OCI-LY7 (cell line): ENCODE measurements at regions of chr11 and their contacts with region 1.

Region 1: DNA sequence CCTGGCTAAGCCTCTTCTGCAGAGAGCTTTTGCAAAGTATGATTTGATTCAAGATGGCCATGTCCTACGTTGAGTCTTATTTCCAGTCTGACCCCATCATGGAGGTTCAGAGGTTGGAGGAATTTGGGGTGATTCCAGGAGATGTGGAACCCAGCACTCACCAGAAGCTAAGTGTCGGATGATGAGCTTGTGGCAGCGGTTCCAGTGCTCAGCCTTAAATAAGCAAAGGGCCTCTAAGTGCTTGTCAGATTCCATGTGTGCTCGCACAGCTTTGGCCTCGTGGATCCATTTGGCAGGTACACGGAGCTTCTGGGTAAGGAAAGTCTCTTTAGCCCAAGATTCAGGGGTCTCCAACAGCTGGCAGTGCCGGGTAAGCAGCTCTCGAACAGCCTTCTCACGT is 11.9 kb upstream of the CHRNA10 start:
- DNase-seq: no peak
- H3K4me3 ChIP-seq: no peak overlapping the region
- H3K27ac ChIP-seq: no peak overlapping the region
- H3K4me1 ChIP-seq: no peaks in the 10 kb centered on the region
- CTCF ChIP-seq: no peak

Region 2: GRCh38 chr11:3723014-3723708 is 40.1 kb after region 1 on chr11:
- CTCF ChIA-PET with region 1: no interaction called
- POLR2A ChIA-PET with region 1: no interaction called
- intact Hi-C with region 1: loop called (anchors 5 kb)
- DNase-seq: no peak
- H3K4me3 ChIP-seq: no peak overlapping the region
- H3K27ac ChIP-seq: no peak overlapping the region
- H3K4me1 ChIP-seq: no peaks in the 10 kb centered on the region
- CTCF ChIP-seq: no peak

Region 3: DNA sequence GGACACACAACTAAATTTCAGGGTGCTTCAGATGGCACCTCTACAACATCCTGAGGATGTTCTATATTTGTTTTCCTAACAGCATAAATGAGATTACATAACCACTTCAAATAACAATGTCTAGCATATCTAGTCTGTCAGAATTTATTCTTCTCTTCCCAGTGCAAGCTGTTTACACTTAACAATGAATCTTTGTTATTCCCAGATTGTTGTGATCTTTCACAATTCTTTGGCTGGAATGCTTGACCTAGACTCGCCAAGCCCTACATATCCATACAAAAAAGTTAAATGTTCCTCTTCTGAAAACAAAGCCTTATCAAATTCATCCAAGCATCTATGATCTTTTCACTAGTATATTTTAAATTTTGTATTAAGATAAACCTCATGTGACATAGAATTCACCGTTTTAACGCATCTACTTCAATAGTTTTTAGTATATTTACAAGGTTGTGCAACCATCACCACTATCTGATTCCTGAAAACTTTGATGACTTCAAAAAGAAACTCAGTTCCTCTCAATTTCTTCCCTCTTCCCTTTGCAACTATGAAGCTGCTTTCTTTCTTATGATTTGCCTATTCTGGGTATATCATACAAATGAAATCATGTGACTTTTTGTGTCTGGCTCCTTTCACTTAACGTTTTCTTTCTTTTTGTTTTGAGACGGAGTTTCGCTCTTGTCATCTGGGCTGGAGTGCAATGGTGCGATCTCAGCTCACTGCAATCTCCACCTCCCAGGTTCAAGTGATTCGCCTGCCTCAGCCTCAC is 49.8 kb after region 1 on chr11:
- CTCF ChIA-PET with region 1: no interaction called
- POLR2A ChIA-PET with region 1: interaction called, 14 read pairs
- intact Hi-C with region 1: no loop called
- DNase-seq: no peak
- H3K4me3 ChIP-seq: no peak overlapping the region
- H3K27ac ChIP-seq: no peak overlapping the region
- H3K4me1 ChIP-seq: no peaks in the 10 kb centered on the region
- CTCF ChIP-seq: no peak